ENCODE measurements at regions of chr1 and their contacts with region 1.

Region 1: GRCh38 chr1:91404151-91405012 is at the start of gene HFM1:
- DNase-seq: peak; percentile 85 to 95 (median 89)
- ATAC-seq: peak; percentile 98
- H3K4me3 ChIP-seq: peak within 1 kb of the TSS; percentile 76
- H3K27ac ChIP-seq: peak within 1 kb of the TSS; percentile 84
- H3K4me1 ChIP-seq: peaks cover 6 to 10% of the 10 kb centered on the region in 2 experiments; a peak in 3 of 5 replicates
- H3K27me3 ChIP-seq: no peaks in the 10 kb centered on the region
- CTCF ChIP-seq: peak in 2 of 3 experiments; percentile 20 to 29; a peak in 2 of 6 replicates
- EP300 ChIP-seq: peak; percentile 1; the same call in 1 of the 2 replicates
- POLR2A ChIP-seq: peak; percentile 96
- RAD21 ChIP-seq: no peak
- polyA plus RNA-seq, gene HFM1: 1.5 to 2.3 TPM

Region 2: DNA sequence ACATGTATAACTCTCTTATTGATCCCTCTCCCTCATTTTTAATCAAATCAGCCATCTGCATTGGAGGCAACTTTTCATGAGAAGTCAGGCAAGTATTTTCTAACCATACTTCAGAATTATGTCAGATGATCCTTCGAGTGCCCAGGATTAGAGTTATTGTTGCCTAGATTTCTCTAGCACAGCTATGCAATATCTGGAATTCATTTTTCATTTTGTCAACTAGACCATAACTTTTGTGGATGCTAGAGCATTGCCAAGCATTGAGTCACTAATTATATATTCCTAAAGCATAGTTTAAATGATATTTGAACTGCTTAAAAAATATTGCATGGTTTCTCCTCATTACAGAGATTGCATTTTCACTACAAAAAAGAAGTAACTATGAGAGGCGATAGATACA is 20.9 kb before region 1 on chr1:
- CTCF ChIA-PET with region 1: no interaction called
- POLR2A ChIA-PET with region 1: no interaction called
- in situ Hi-C with region 1: no loop called
- intact Hi-C with region 1: no loop called
- DNase-seq: no peak
- ATAC-seq: no peak
- H3K4me3 ChIP-seq: no peak overlapping the region
- H3K27ac ChIP-seq: no peak overlapping the region
- H3K4me1 ChIP-seq: peaks cover 0 to 6% of the 10 kb centered on the region in 2 experiments; a peak in 2 of 5 replicates
- H3K27me3 ChIP-seq: no peaks in the 10 kb centered on the region
- CTCF ChIP-seq: no peak
- EP300 ChIP-seq: no peak
- POLR2A ChIP-seq: no peak
- RAD21 ChIP-seq: no peak

Region 3: GRCh38 chr1:91500756-91501522 is 96.6 kb after region 1 on chr1 and contains the start of gene CDC7:
- CTCF ChIA-PET with region 1: no interaction called
- POLR2A ChIA-PET with region 1: interaction called, 5 read pairs
- in situ Hi-C with region 1: no loop called
- intact Hi-C with region 1: loop called (anchors 1 kb)
- DNase-seq: peak; percentile 95 to 97 (median 96)
- ATAC-seq: peak; percentile 83
- H3K4me3 ChIP-seq: peak within 1 kb of the TSS; percentile 56
- H3K27ac ChIP-seq: peak within 1 kb of the TSS; percentile 97
- H3K4me1 ChIP-seq: peaks cover 0 to 43% of the 10 kb centered on the region in 2 experiments
- H3K27me3 ChIP-seq: no peaks in the 10 kb centered on the region
- CTCF ChIP-seq: peak; percentile 51 to 59 (median 55); a peak in 5 of 6 replicates
- EP300 ChIP-seq: peak; percentile 2; the same call in 1 of the 2 replicates
- POLR2A ChIP-seq: peak; percentile 92
- RAD21 ChIP-seq: peak; percentile 24 to 28
- polyA plus RNA-seq, gene CDC7: 22.3 to 66.8 TPM

Region 4: GRCh38 chr1:91523482-91523881 is 119.1 kb after region 1 on chr1:
- CTCF ChIA-PET with region 1: no interaction called
- POLR2A ChIA-PET with region 1: no interaction called
- in situ Hi-C with region 1: no loop called
- intact Hi-C with region 1: no loop called
- DNase-seq: no peak
- ATAC-seq: no peak
- H3K4me3 ChIP-seq: no peak overlapping the region
- H3K27ac ChIP-seq: no peak overlapping the region
- H3K4me1 ChIP-seq: no peaks in the 10 kb centered on the region; a peak in 1 of 5 replicates
- H3K27me3 ChIP-seq: no peaks in the 10 kb centered on the region
- CTCF ChIP-seq: no peak
- EP300 ChIP-seq: no peak
- POLR2A ChIP-seq: no peak
- RAD21 ChIP-seq: no peak

Region 5: GRCh38 chr1:91924146-91924545 is 519.8 kb after region 1 on chr1:
- CTCF ChIA-PET with region 1: no interaction called
- POLR2A ChIA-PET with region 1: no interaction called
- in situ Hi-C with region 1: no loop called
- intact Hi-C with region 1: loop called (anchors 10 kb)
- DNase-seq: no peak
- ATAC-seq: no peak
- H3K4me3 ChIP-seq: no peak overlapping the region
- H3K27ac ChIP-seq: no peak overlapping the region
- H3K4me1 ChIP-seq: no peaks in the 10 kb centered on the region
- H3K27me3 ChIP-seq: no peaks in the 10 kb centered on the region
- CTCF ChIP-seq: no peak
- EP300 ChIP-seq: no peak
- POLR2A ChIP-seq: no peak
- RAD21 ChIP-seq: no peak

Region 6: GRCh38 chr1:92298573-92299476 is 894.4 kb after region 1 on chr1 and contains the starts of genes GLMN and RPAP2:
- CTCF ChIA-PET with region 1: no interaction called
- POLR2A ChIA-PET with region 1: interaction called, 3 read pairs
- in situ Hi-C with region 1: no loop called
- intact Hi-C with region 1: loop called (anchors 10 kb)
- DNase-seq: peak; percentile 83 to 89 (median 86)
- ATAC-seq: peak; percentile 98
- H3K4me3 ChIP-seq: peak within 1 kb of the TSS; percentile 85
- H3K27ac ChIP-seq: peak within 1 kb of the TSS; percentile 96
- H3K4me1 ChIP-seq: peaks cover 3 to 5% of the 10 kb centered on the region in 2 experiments; a peak in 3 of 5 replicates
- H3K27me3 ChIP-seq: no peaks in the 10 kb centered on the region
- CTCF ChIP-seq: 0 out of 6 replicates have a peak, but pooled peaks of 1 of the 3 experiments have one; percentile 16
- EP300 ChIP-seq: no peak
- POLR2A ChIP-seq: peak; percentile 97
- RAD21 ChIP-seq: peak in 1 of 2 experiments; percentile 12; a peak in 2 of 4 replicates
- polyA plus RNA-seq, gene GLMN: 18.9 to 22.6 TPM
- polyA plus RNA-seq, gene RPAP2: 30.6 to 41.7 TPM